ENCODE measurements at regions of chr6 and their contacts with region 1.

Region 1: DNA sequence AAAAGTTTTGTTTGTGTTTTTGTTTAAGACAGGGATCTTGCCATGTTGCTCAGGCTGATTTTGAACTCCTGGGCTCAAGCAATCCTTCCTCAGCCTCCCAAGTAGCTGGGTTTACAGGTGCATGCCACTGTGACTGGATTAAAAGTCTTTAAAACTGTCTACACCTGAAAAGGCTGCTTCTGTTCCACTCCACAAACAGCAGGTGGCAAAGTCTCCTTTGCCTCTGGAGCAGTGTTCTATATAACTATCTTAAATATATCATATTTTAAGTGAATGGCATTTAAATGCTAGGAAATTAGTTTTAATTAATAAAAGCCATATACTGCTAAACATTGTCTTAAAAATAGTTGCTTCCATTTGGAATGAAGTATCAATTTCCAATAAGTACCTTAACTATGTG is 89.2 kb upstream of the BCLAF1 start:
- DNase-seq: no peak
- H3K4me3 Mint-ChIP-seq: no peak overlapping the region
- H3K27ac Mint-ChIP-seq: no peak overlapping the region
- H3K4me1 Mint-ChIP-seq: no peaks in the 10 kb centered on the region
- H3K27me3 Mint-ChIP-seq: peaks cover 6% of the 10 kb centered on the region

Region 2: GRCh38 chr6:136550330-136551071 is 171.6 kb after region 1 on chr6 and contains the start of gene MAP7:
- CTCF ChIA-PET with region 1: interaction called, 3 read pairs
- POLR2A ChIA-PET with region 1: no interaction called
- intact Hi-C with region 1: loop called (anchors 10 kb)
- DNase-seq: peak; percentile 80
- H3K4me3 Mint-ChIP-seq: peak within 1 kb of the TSS; percentile 58
- H3K27ac Mint-ChIP-seq: no peak within 1 kb of the TSS
- H3K4me1 Mint-ChIP-seq: peaks cover 1% of the 10 kb centered on the region
- H3K27me3 Mint-ChIP-seq: peaks cover 23% of the 10 kb centered on the region
- total RNA-seq, gene MAP7: 1.2 to 1.3 TPM

Measured in activated CD4-positive, alpha-beta memory T cell treated with anti-CD3 and anti-CD28 coated beads for 36 hours (primary cell).